Activated CD4-positive, alpha-beta T cell treated with anti-CD3 and anti-CD28 coated beads, Interleukin-2, amount 10 ng/mL, durations not matched to agents 24 days and 14 days (primary cell): ENCODE measurements at regions of chr9 and their contacts with region 1.

Region 1: GRCh38 chr9:130866474-130866965 is 30.1 kb downstream of the QRFP start:
- DNase-seq: peak; percentile 86
- H3K4me3 Mint-ChIP-seq: no peak overlapping the region
- H3K27ac Mint-ChIP-seq: no peak overlapping the region
- H3K4me1 Mint-ChIP-seq: no peaks in the 10 kb centered on the region
- H3K27me3 Mint-ChIP-seq: no peaks in the 10 kb centered on the region

Region 2: DNA sequence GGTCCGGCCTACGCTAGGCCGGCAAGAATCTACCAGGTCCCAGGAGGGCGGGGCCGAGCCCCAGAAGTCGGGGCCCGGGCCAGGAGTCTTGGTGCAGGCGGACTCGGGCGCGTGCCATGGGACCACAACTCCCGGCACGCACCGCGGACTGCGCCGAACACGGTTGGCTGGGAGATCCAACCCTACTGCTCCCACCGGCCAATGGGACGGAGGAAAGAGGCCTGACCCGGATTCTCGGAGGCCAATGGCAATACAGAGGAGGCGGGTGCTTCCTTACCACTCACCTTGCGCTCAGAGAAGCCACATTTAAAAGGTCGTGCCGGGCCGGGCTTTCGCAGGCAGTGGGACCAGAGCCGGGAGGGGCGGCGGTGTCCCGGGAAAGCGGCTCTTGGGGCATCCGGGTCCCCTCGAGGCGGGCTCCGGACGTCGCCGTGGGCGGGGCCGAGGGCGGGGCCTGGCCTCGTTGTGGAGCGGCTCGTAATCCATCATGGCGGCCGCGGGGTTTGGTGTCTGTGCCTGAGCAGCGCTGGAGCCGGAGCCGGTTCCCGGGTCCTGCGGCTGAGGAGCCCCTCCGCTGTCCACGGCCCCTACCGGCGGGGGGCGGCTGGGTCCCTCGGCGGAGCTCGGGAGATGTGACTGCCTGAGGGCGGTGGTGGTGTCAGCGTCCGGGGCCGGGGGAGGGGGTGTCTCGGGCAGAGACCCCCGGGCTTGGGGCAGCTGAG is 153.8 kb before region 1 on chr9:
- intact Hi-C with region 1: loop called (anchors 1 kb)
- DNase-seq: peak; percentile 98
- H3K4me3 Mint-ChIP-seq: peak overlapping the region; percentile 96
- H3K27ac Mint-ChIP-seq: peak overlapping the region; percentile 94
- H3K4me1 Mint-ChIP-seq: peaks cover 25% of the 10 kb centered on the region
- H3K27me3 Mint-ChIP-seq: no peaks in the 10 kb centered on the region

Region 3: GRCh38 chr9:130805510-130806326 is 60.8 kb before region 1 on chr9:
- intact Hi-C with region 1: loop called (anchors 2 kb)
- DNase-seq: no peak
- H3K4me3 Mint-ChIP-seq: no peak overlapping the region
- H3K27ac Mint-ChIP-seq: no peak overlapping the region
- H3K4me1 Mint-ChIP-seq: no peaks in the 10 kb centered on the region
- H3K27me3 Mint-ChIP-seq: no peaks in the 10 kb centered on the region

Region 4: GRCh38 chr9:130884980-130885696 is 18.6 kb after region 1 on chr9:
- intact Hi-C with region 1: no loop called
- DNase-seq: no peak
- H3K4me3 Mint-ChIP-seq: no peak overlapping the region
- H3K27ac Mint-ChIP-seq: no peak overlapping the region
- H3K4me1 Mint-ChIP-seq: no peaks in the 10 kb centered on the region
- H3K27me3 Mint-ChIP-seq: no peaks in the 10 kb centered on the region

Region 5: DNA sequence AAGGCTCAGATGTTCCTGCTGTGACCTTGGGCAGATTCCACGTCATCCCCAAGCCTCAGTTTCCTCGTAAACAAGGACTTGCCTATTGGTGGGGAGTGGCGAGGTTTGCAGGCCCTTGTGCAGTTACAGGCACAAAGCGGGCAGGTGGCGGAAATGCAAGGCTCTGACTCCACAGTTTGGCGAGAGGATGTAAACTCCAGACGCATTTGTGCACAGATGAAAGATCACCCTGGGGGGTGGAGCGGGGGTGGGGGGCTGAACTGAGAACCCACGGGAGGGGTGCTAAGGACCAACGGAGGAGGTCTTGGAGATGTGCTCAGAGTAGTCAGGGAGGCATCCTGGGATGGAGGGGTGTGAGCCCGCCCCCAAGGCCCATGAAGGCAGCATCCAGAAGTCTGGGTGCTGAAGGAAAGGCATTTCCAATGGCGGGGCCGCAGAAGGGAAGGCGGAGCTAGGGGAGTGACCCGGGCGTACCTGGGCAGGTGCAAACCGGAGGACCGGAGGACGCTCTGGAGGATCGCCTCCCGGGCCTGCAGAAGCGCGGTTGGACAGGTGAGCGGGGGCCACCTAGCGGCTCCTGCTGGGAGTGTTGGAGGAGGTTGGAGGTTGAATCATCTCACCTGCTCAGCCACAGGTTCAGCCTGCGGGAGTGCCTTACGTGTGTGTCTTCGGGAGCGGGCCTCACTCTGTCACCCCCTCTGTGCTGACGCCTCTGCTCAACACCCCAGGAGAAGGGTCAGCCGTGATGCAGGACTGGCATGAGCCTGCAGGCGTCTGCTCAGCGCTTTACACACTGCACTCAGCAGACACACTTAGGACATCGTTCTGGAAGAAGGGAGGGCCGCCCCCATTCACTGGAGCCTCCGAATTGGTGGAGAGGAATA is 74.4 kb after region 1 on chr9:
- intact Hi-C with region 1: loop called (anchors 1 kb)
- DNase-seq: peak; percentile 92
- H3K4me3 Mint-ChIP-seq: no peak overlapping the region
- H3K27ac Mint-ChIP-seq: no peak overlapping the region
- H3K4me1 Mint-ChIP-seq: peaks cover 6% of the 10 kb centered on the region
- H3K27me3 Mint-ChIP-seq: peaks cover 38% of the 10 kb centered on the region